CD8-positive, alpha-beta T cell (primary cell): ENCODE measurements at regions of chr9 and their contacts with region 1.

Region 1: DNA sequence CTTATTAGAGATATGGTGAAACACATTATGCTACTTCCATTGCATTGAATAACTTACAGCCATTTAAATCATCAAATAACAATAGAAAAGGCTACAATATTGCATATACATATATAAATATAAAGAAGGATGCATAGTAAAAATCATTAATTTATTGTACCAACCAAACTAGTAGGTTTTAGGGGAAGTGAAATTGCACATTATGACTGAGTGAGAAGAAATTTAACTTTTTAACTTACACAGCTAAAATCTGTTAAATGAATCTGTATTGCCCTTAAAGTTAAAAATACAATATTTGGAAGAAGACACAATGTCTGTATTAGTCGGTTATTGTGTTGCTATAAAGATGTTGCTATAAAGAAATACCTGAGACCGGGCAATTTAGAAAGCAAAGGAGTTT is 2073.7 kb upstream of the ACO1 start:
- DNase-seq: no peak
- ATAC-seq: no peak
- H3K4me3 ChIP-seq: no peak overlapping the region
- H3K4me3 Mint-ChIP-seq: no peak overlapping the region
- H3K27ac ChIP-seq: no peak overlapping the region
- H3K27ac Mint-ChIP-seq: no peak overlapping the region
- H3K4me1 ChIP-seq: no peaks in the 10 kb centered on the region
- H3K4me1 Mint-ChIP-seq: no peaks in the 10 kb centered on the region
- H3K27me3 ChIP-seq: no peaks in the 10 kb centered on the region
- H3K27me3 Mint-ChIP-seq: no peaks in the 10 kb centered on the region
- CTCF ChIP-seq: no peak

Region 2: DNA sequence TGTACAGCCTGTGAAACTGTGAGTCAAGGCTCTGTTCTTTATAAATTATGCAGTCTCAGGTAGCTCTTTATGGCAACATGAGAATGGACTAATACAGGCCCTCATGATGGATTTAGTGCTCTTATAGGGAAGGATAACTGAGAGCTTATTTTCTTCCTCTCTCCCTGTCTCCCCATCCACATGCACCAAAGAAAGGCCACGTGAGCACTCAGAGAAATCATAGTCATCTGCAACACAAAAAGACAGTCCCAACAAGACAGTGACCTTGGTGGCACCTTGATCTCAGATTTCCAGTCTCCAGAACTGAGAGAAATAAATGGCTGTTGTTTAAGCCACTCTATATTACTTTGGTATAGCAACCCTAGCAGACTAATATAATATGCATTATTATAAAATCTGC is 59.8 kb before region 1 on chr9:
- CTCF ChIA-PET with region 1: no interaction called
- POLR2A ChIA-PET with region 1: no interaction called
- intact Hi-C with region 1: no loop called
- DNase-seq: no peak
- ATAC-seq: no peak
- H3K4me3 ChIP-seq: no peak overlapping the region
- H3K4me3 Mint-ChIP-seq: no peak overlapping the region
- H3K27ac ChIP-seq: no peak overlapping the region
- H3K27ac Mint-ChIP-seq: no peak overlapping the region
- H3K4me1 ChIP-seq: no peaks in the 10 kb centered on the region
- H3K4me1 Mint-ChIP-seq: no peaks in the 10 kb centered on the region
- H3K27me3 ChIP-seq: no peaks in the 10 kb centered on the region
- H3K27me3 Mint-ChIP-seq: no peaks in the 10 kb centered on the region
- CTCF ChIP-seq: no peak

Region 3: DNA sequence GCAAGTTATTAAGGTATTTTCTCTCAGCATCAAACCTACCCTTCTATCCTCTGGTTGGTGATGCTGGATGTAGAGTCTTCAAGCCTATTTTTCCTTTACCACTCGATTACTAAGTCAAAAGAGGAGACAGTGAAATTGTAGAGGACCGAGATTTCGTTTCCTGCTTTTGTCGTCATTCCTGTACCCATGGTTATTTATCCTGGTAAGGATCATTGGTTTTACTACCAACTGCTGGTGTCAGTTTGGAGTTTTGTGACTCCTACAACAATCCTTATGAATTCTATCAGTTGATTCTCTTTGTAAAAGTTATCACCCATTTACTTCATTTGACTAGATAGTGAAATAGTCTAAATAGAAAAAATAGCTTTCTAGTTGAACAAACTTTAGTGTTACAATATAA is 45.5 kb after region 1 on chr9:
- CTCF ChIA-PET with region 1: no interaction called
- POLR2A ChIA-PET with region 1: no interaction called
- intact Hi-C with region 1: loop called in 1 of 2 experiments (anchors 1 kb)
- DNase-seq: no peak
- ATAC-seq: no peak
- H3K4me3 ChIP-seq: no peak overlapping the region
- H3K4me3 Mint-ChIP-seq: no peak overlapping the region
- H3K27ac ChIP-seq: no peak overlapping the region
- H3K27ac Mint-ChIP-seq: no peak overlapping the region
- H3K4me1 ChIP-seq: no peaks in the 10 kb centered on the region
- H3K4me1 Mint-ChIP-seq: no peaks in the 10 kb centered on the region
- H3K27me3 ChIP-seq: no peaks in the 10 kb centered on the region
- H3K27me3 Mint-ChIP-seq: no peaks in the 10 kb centered on the region
- CTCF ChIP-seq: no peak